Activated naive CD4-positive, alpha-beta T cell treated with anti-CD3 and anti-CD28 coated beads for 36 hours (primary cell): ENCODE measurements at regions of chr15 and their contacts with region 1.

Region 1: GRCh38 chr15:61834076-61834697 is 226.1 kb downstream of the VPS13C start:
- DNase-seq: peak; percentile 83
- H3K4me3 Mint-ChIP-seq: no peak overlapping the region
- H3K27ac Mint-ChIP-seq: no peak overlapping the region
- H3K4me1 Mint-ChIP-seq: no peaks in the 10 kb centered on the region
- H3K27me3 Mint-ChIP-seq: peaks cover 18% of the 10 kb centered on the region

Region 2: DNA sequence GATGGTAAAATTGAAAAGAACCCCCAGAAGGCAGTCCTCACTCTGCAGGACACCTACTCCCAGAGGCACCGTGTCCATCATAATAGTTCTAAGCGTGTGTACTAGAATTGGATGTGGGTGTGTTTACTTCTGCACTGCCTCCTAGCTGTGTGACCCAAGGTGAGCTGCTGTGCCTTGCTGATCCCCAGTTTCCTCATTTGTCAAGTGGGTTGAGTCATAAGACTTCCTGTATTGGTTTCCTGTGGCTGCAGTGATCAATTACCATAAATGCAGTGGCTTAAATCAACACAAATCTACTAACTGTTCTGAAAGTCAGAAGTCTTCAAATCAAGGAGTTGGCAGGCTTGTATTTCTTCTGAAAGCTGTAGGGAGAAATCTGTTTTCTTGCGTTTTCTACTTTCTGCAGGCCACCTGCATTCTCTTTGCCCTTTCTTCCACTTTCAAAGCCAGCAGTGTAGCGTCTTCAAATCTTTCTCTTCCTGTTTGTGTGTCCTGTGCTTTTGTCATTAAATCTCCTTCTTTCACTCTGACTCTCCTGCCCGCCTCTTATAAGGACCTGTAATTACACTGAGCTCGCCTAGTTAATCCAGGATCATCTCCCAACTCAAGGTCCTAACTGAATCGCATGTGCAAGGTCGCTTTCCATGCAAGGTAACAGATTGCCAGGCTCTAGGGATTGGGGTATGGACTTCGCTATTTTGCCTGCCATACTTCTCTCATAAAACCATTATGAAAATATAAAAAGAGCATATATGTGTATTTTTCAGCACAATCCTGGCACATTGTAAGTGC is 664.1 kb before region 1 on chr15:
- CTCF ChIA-PET with region 1: interaction called, 13 read pairs
- intact Hi-C with region 1: loop called (anchors 1 kb)
- DNase-seq: peak; percentile 46
- H3K4me3 Mint-ChIP-seq: no peak overlapping the region
- H3K27ac Mint-ChIP-seq: no peak overlapping the region
- H3K4me1 Mint-ChIP-seq: peaks cover 18% of the 10 kb centered on the region
- H3K27me3 Mint-ChIP-seq: no peaks in the 10 kb centered on the region

Region 3: DNA sequence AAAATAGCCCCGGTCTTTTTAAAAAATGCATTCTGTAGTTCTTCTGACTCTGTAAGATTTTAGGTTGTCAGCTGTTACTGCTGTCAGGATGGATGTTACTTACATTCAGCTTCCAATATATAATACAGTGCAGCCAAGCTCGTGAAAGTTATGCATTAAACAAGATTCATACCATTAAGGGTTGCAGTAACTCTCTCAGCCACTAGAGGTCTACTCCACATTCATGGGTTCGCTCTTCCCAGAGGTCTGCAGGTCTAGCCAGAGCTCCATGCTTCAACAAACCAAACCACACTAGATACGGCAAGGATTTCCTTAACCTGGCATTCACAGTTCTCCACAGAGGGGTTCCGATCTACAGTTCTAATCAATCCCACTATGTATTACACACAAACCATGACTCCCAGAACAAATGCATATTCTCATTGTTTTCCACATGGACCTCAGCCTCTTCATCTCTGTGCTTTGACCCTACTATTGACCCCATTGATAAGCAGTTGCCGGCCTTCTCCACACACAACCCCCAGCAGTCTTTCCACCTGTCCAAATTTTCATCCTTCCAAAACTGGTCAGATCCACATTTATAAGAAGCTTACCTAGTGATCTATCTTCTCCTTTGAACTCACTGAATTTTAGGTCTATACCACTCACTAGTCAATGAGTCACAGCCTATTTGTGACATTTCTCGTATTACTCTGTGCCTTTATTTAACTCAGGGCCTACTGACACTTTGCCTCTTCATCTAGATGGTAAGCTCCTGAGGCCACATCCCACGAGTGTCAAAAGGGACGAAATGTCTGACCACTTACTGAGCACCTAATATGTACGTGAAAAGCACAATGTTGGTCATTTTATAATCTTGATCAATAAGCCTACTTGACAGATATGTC is 638.8 kb before region 1 on chr15:
- CTCF ChIA-PET with region 1: interaction called, 10 read pairs
- intact Hi-C with region 1: no loop called
- DNase-seq: peak; percentile 6
- H3K4me3 Mint-ChIP-seq: no peak overlapping the region
- H3K27ac Mint-ChIP-seq: no peak overlapping the region
- H3K4me1 Mint-ChIP-seq: no peaks in the 10 kb centered on the region
- H3K27me3 Mint-ChIP-seq: peaks cover 3% of the 10 kb centered on the region

Region 4: DNA sequence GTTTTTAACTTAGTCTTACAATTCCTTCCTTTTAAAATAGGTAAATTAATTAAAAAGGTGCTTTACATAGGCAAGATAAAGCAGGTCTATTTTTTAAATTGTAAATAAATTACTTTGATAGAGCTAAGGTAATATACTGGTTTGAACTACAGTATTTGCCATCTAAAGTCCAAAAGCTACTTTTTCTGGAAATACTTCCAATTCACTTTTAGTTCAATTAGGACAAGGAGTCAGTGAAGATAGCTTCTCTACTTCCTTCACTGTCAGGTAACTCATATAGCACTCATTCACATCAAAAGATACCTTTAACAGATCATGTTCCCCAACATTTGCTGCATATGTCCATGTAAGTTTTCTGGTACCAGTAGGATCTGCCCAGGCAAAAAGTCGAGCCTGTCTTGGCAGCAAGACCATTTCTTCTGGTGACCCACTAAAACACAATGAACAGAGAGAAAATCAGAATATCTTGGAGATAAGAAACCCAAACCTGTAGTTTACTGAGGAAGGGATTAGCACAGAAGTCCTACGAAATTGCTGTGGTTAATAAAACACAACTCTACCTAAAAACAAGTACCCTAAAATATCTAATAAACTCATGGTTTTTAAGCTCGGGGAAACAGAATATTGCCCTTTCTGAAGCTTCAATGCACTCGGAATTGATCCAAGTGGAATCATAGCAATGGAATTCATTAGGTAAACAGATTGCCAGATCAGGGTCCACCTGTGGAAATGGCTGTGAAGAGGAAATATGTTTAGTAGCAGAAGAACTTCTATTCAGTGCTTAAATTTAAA is 73.0 kb after region 1 on chr15:
- CTCF ChIA-PET with region 1: no interaction called
- intact Hi-C with region 1: no loop called
- DNase-seq: no peak
- H3K4me3 Mint-ChIP-seq: no peak overlapping the region
- H3K27ac Mint-ChIP-seq: no peak overlapping the region
- H3K4me1 Mint-ChIP-seq: no peaks in the 10 kb centered on the region
- H3K27me3 Mint-ChIP-seq: no peaks in the 10 kb centered on the region